ENCODE measurements at regions of chr16 and their contacts with region 1.

Region 1: GRCh38 chr16:30747799-30748634 is at the start of gene PHKG2:
- DNase-seq: peak; percentile 97 to 99 (median 98)
- H3K4me3 ChIP-seq: peak within 1 kb of the TSS; percentile 48 to 79 (median 69)
- H3K4me3 Mint-ChIP-seq: peak within 1 kb of the TSS; percentile 92 to 93
- H3K27ac ChIP-seq: peak within 1 kb of the TSS; percentile 69 to 88
- H3K27ac Mint-ChIP-seq: peak within 1 kb of the TSS; percentile 80 to 95 (median 90)
- H3K4me1 ChIP-seq: peaks cover 23 to 24% of the 10 kb centered on the region in 2 donors
- H3K4me1 Mint-ChIP-seq: peaks cover 27% of the 10 kb centered on the region
- H3K27me3 ChIP-seq: no peaks in the 10 kb centered on the region
- H3K27me3 Mint-ChIP-seq: no peaks in the 10 kb centered on the region
- CTCF ChIP-seq: no peak
- polyA plus RNA-seq, gene PHKG2: 45.4 to 115 (median 54.2) TPM

Region 2: GRCh38 chr16:30637942-30638341 is 110.1 kb before region 1 on chr16:
- intact Hi-C with region 1: no loop called
- DNase-seq: peak; percentile 47 to 69 (median 61)
- H3K4me3 ChIP-seq: no peak overlapping the region
- H3K4me3 Mint-ChIP-seq: no peak overlapping the region
- H3K27ac ChIP-seq: no peak overlapping the region
- H3K27ac Mint-ChIP-seq: peak overlapping the region in 1 of 7 donors; percentile 70
- H3K4me1 ChIP-seq: peaks cover 12 to 17% of the 10 kb centered on the region in 2 donors
- H3K4me1 Mint-ChIP-seq: peaks cover 12% of the 10 kb centered on the region
- H3K27me3 ChIP-seq: no peaks in the 10 kb centered on the region
- H3K27me3 Mint-ChIP-seq: peaks cover 0 to 3% (median 2%) of the 10 kb centered on the region in 3 donors
- CTCF ChIP-seq: peak; percentile 47

Region 3: GRCh38 chr16:30715737-30716445 is 32.1 kb before region 1 on chr16:
- intact Hi-C with region 1: loop called in 1 of 2 experiments (anchors 5 kb)
- DNase-seq: peak; percentile 88 to 95 (median 94)
- H3K4me3 ChIP-seq: peak overlapping the region in 1 of 3 experiments; percentile 16
- H3K4me3 Mint-ChIP-seq: peak overlapping the region; percentile 2 to 67
- H3K27ac ChIP-seq: peak overlapping the region; percentile 92 to 98
- H3K27ac Mint-ChIP-seq: peak overlapping the region; percentile 97 to 99 (median 99)
- H3K4me1 ChIP-seq: peaks cover 39 to 41% of the 10 kb centered on the region in 2 donors
- H3K4me1 Mint-ChIP-seq: peaks cover 33% of the 10 kb centered on the region
- H3K27me3 ChIP-seq: no peaks in the 10 kb centered on the region
- H3K27me3 Mint-ChIP-seq: peaks cover 0 to 7% (median 0%) of the 10 kb centered on the region in 3 donors
- CTCF ChIP-seq: no peak

Region 4: DNA sequence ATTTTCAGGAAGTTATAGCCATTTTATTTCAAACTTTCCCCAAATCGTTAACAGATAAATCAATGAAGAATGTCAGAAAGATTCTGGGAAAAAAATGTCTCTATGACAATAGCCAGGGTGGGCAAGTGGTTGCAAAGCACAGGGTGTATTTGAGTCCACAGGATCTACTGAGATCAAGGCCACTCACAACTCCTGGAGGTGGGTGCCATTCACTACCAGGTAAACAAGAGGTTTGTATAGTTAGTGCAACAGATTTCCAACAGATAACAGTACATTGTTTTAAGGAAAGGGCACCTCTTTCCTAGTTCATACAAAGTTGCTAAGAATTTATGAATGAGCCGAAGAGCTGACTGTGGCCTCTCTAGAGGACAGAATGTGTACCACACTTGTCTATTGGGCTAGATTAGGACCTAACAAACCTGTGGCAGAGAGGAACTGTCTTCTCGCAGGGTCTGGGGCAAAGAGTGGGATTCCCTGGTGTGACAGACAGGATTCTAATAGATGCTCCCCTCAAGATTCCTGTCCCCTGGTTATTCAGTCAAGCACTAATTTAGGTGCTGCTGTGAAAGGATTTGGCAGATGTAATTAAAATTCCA is 91.0 kb after region 1 on chr16:
- intact Hi-C with region 1: no loop called
- DNase-seq: no peak
- H3K4me3 ChIP-seq: no peak overlapping the region
- H3K4me3 Mint-ChIP-seq: no peak overlapping the region
- H3K27ac ChIP-seq: no peak overlapping the region
- H3K27ac Mint-ChIP-seq: no peak overlapping the region
- H3K4me1 ChIP-seq: no peaks in the 10 kb centered on the region
- H3K4me1 Mint-ChIP-seq: no peaks in the 10 kb centered on the region
- H3K27me3 ChIP-seq: no peaks in the 10 kb centered on the region
- H3K27me3 Mint-ChIP-seq: no peaks in the 10 kb centered on the region
- CTCF ChIP-seq: no peak

Region 5: DNA sequence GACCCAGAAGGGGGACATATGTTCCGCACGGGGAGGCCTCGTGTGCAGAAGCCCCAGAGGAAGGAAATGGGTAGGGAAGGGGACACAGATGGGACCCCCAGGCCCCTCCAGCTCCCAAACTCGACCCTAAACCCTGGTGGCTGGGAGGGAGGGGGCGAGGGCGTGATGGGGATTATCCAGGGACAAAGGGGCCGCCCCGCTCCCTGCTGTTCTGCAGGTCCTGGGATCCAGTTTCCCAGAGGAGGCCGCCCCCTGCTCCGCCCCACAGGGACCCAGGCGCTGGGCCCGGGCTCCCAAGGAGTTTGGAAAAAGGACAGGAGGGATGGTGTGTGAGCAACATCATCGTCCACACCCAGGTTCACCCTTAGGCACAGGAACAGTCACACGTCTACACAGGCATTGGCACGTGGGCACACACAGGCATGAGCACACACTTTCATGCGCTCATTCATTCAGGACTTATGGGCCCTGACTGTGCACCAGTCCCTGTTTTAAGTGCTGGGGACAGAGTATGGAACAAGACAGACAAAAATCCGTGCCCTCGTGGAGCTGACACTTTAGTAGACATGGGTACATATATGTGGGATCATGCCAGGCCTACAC is 162.5 kb after region 1 on chr16:
- intact Hi-C with region 1: no loop called
- DNase-seq: no peak
- H3K4me3 ChIP-seq: no peak overlapping the region
- H3K4me3 Mint-ChIP-seq: no peak overlapping the region
- H3K27ac ChIP-seq: no peak overlapping the region
- H3K27ac Mint-ChIP-seq: no peak overlapping the region
- H3K4me1 ChIP-seq: no peaks in the 10 kb centered on the region
- H3K4me1 Mint-ChIP-seq: peaks cover 2% of the 10 kb centered on the region
- H3K27me3 ChIP-seq: no peaks in the 10 kb centered on the region
- H3K27me3 Mint-ChIP-seq: peaks cover 0 to 8% (median 4%) of the 10 kb centered on the region in 3 donors
- CTCF ChIP-seq: no peak

Measured in CD14-positive monocyte (primary cell).